Posterior vena cava (tissue), 2 donors: ENCODE measurements at regions of chr5 and their contacts with region 1.

Region 1: DNA sequence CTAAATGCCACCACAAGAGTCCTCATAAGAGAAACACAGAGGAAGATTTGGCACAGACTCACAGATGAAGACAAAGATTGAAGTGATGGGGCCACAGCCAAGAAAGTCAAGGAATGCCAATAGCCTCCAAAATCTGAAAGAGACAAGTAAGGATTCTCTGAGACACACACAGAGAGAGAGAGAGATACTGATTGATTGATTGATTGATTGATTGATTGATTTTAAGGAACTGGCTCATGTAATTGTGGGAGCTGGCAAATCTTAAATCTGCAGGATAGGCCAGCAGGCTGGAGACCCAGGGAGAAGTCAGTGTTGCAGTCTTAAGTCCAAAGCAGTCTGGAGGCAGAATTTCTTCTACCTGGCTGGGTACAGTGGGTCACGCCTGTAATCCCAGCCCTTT is 27.2 kb upstream of the KIF2A start:
- DNase-seq: no peak

Region 2: GRCh38 chr5:62828742-62829603 is 550.1 kb after region 1 on chr5:
- intact Hi-C with region 1: loop called in 1 of 2 experiments (anchors 5 kb)
- DNase-seq: no peak